ENCODE measurements at regions of chr12 and their contacts with region 1.

Region 1: DNA sequence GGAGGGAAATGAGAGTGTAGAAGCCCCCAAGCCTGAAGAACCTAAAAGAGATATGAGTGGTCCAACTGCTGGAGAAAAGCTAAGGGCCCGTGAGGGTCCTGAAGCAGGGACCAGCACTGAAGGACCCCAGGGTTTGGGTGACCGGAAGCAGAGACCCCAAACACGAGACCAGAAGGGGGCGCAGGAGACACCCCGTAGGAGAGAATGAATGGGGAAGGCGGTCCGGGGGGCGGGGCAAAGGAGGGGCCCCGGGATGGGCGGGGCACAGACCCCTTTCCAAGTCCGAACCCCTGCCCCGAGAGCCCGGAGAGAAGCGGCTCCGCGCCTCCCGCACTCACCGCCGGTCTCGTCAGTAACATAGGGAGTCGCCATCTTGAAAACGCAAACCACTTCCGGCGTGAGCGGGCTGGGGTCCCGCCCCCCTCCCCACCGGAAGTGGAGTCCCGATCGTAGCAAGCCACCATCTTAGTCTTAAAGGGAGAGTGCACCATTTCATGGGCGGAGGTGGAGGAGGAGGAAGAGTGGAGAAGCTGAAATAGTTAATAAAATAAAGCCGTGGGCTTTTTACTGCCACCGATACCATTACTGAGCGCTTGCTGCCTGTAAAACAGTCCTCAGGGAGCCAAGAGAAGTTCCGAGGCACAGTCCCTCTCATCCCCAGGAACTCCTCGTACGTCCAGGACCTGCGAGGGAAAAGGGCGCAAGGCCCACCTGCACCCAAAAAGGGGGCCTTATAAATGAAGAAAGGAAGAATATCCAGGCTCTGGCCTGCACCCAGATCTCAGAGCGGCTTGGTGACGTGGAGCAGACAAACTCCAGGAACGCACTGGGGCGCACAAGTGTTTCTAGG is 731 bp downstream of the PYM1 start:
- DNase-seq: peak; percentile 96
- H3K4me3 Mint-ChIP-seq: peak overlapping the region; percentile 99
- H3K27ac Mint-ChIP-seq: peak overlapping the region; percentile 98
- H3K4me1 Mint-ChIP-seq: peaks cover 40% of the 10 kb centered on the region
- H3K27me3 Mint-ChIP-seq: peaks cover 2% of the 10 kb centered on the region

Region 2: GRCh38 chr12:55715833-55716581 is 211.0 kb before region 1 on chr12 and contains the start of gene BLOC1S1:
- intact Hi-C with region 1: loop called (anchors 1 kb)
- DNase-seq: peak; percentile 98
- H3K4me3 Mint-ChIP-seq: peak within 1 kb of the TSS; percentile 98
- H3K27ac Mint-ChIP-seq: peak within 1 kb of the TSS; percentile 98
- H3K4me1 Mint-ChIP-seq: peaks cover 27% of the 10 kb centered on the region
- H3K27me3 Mint-ChIP-seq: peaks cover 15% of the 10 kb centered on the region
- total RNA-seq, gene BLOC1S1: 62.7 and 64.8 TPM in 2 replicates

Region 3: DNA sequence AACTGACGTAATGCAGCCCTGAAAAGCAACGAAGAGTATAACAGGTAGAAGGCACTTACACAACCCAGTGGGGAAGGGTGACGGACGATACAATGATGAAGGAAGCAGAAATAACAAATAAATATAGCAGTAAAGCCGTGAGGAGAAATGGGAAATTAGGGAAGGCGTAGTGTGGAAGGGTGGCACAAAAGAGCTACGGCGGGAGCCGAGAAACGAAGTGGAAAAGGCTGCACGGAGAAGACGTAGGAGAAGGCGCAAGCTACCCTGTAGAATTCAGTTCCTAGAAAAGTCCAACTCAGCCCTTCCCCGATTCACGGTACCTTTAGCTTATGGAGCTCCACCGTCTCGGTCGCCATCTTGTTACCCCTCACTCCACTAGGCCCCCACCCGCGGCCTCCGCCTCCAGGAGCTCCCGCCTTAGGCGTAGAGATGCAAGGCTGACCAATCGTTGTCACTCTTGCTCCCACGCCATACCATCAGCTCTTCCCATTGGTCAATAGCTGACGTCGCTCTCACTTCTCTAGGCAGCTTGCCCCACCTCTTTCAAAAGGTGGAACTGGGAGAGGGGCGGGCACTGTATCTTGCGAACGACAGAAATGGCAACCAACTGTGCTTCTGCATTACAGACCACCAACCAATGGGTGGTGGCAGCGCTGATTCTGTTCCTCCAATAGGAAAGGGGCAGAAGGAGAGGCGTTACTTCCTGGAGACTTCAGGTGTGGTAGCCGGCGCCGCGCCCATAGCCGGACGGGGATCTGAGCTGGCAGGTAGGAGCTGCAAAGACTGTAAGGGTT is 109.4 kb before region 1 on chr12 and contains the starts of genes ORMDL2 and SARNP:
- intact Hi-C with region 1: loop called (anchors 1 kb)
- DNase-seq: peak; percentile 99
- H3K4me3 Mint-ChIP-seq: no peak within 1 kb of the TSS
- H3K27ac Mint-ChIP-seq: peak within 1 kb of the TSS; percentile 39
- H3K4me1 Mint-ChIP-seq: peaks cover 23% of the 10 kb centered on the region
- H3K27me3 Mint-ChIP-seq: no peaks in the 10 kb centered on the region
- total RNA-seq, gene ORMDL2: 49.8 and 55.8 TPM in 2 replicates
- total RNA-seq, gene SARNP: 76.6 and 81.6 TPM in 2 replicates

Region 4: GRCh38 chr12:55885113-55885512 is 41.9 kb before region 1 on chr12:
- intact Hi-C with region 1: no loop called
- DNase-seq: no peak
- H3K4me3 Mint-ChIP-seq: no peak overlapping the region
- H3K27ac Mint-ChIP-seq: no peak overlapping the region
- H3K4me1 Mint-ChIP-seq: peaks cover 15% of the 10 kb centered on the region
- H3K27me3 Mint-ChIP-seq: no peaks in the 10 kb centered on the region

Region 5: GRCh38 chr12:55940065-55940732 is 13.2 kb after region 1 on chr12:
- intact Hi-C with region 1: loop called (anchors 1 kb)
- DNase-seq: peak; percentile 95
- H3K4me3 Mint-ChIP-seq: peak overlapping the region; percentile 60
- H3K27ac Mint-ChIP-seq: peak overlapping the region; percentile 76
- H3K4me1 Mint-ChIP-seq: peaks cover 67% of the 10 kb centered on the region
- H3K27me3 Mint-ChIP-seq: no peaks in the 10 kb centered on the region

Region 6: GRCh38 chr12:56041552-56042429 is 114.8 kb after region 1 on chr12 and contains the start of gene RPS26:
- intact Hi-C with region 1: loop called (anchors 1 kb)
- DNase-seq: peak; percentile 97
- H3K4me3 Mint-ChIP-seq: peak within 1 kb of the TSS; percentile 100
- H3K27ac Mint-ChIP-seq: peak within 1 kb of the TSS; percentile 99
- H3K4me1 Mint-ChIP-seq: peaks cover 50% of the 10 kb centered on the region
- H3K27me3 Mint-ChIP-seq: no peaks in the 10 kb centered on the region
- total RNA-seq, gene RPS26: 40.5 and 46.3 TPM in 2 replicates